Esophagus squamous epithelium (tissue), 5 donors: ENCODE measurements at regions of chr1 and their contacts with region 1.

Region 1: GRCh38 chr1:165600793-165601192 is 30.2 kb upstream of the MGST3 start:
- DNase-seq: no peak
- H3K4me3 ChIP-seq: no peak overlapping the region
- H3K27ac ChIP-seq: no peak overlapping the region
- H3K4me1 ChIP-seq: peaks cover 5 to 18% (median 8%) of the 10 kb centered on the region in 3 donors
- H3K27me3 ChIP-seq: peaks cover 0 to 3% (median 0%) of the 10 kb centered on the region in 4 donors
- CTCF ChIP-seq: no peak
- POLR2A ChIP-seq: no peak

Region 2: GRCh38 chr1:165306541-165307434 is 294.0 kb before region 1 on chr1:
- intact Hi-C with region 1: no loop called
- DNase-seq: no peak
- H3K4me3 ChIP-seq: no peak overlapping the region
- H3K27ac ChIP-seq: no peak overlapping the region
- H3K4me1 ChIP-seq: no peaks in the 10 kb centered on the region
- H3K27me3 ChIP-seq: peaks cover 0 to 73% (median 0%) of the 10 kb centered on the region in 4 donors
- CTCF ChIP-seq: peak in 1 of 6 experiments; percentile 21
- POLR2A ChIP-seq: no peak

Region 3: DNA sequence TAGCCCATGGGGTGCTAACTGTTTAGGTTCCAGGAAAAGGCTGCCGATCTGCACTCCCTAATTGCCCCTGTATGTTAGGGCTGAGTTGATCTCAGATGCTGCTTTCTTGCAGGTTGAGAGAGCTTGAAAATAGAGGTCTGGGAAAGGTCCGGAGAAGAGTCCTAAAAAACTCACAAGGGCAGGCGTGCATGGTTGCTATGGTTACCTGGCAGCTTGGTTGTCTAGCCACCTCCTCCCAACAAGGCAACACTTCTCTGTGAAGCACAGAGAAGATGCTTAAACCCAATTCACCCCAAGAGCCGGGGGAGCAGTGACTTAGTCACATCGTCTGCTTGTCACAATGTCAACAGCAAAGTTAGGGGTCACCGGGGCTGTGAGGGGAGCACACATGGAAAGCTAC is 88.0 kb before region 1 on chr1:
- intact Hi-C with region 1: no loop called
- DNase-seq: no peak
- H3K4me3 ChIP-seq: no peak overlapping the region
- H3K27ac ChIP-seq: no peak overlapping the region
- H3K4me1 ChIP-seq: no peaks in the 10 kb centered on the region
- H3K27me3 ChIP-seq: no peaks in the 10 kb centered on the region
- CTCF ChIP-seq: no peak
- POLR2A ChIP-seq: no peak

Region 4: GRCh38 chr1:165531021-165531420 is 69.8 kb before region 1 on chr1:
- intact Hi-C with region 1: no loop called
- DNase-seq: no peak
- H3K4me3 ChIP-seq: no peak overlapping the region
- H3K27ac ChIP-seq: no peak overlapping the region
- H3K4me1 ChIP-seq: no peaks in the 10 kb centered on the region
- H3K27me3 ChIP-seq: peaks cover 0 to 8% (median 0%) of the 10 kb centered on the region in 4 donors
- CTCF ChIP-seq: no peak
- POLR2A ChIP-seq: no peak

Region 5: GRCh38 chr1:165717918-165718515 is 117.2 kb after region 1 on chr1:
- intact Hi-C with region 1: loop called (anchors 10 kb)
- DNase-seq: no peak
- H3K4me3 ChIP-seq: no peak overlapping the region
- H3K27ac ChIP-seq: no peak overlapping the region
- H3K4me1 ChIP-seq: no peaks in the 10 kb centered on the region
- H3K27me3 ChIP-seq: no peaks in the 10 kb centered on the region
- CTCF ChIP-seq: peak; percentile 32 to 76 (median 61)
- POLR2A ChIP-seq: no peak

Region 6: GRCh38 chr1:165807613-165808012 is 206.8 kb after region 1 on chr1:
- intact Hi-C with region 1: no loop called
- DNase-seq: no peak
- H3K4me3 ChIP-seq: no peak overlapping the region
- H3K27ac ChIP-seq: no peak overlapping the region
- H3K4me1 ChIP-seq: no peaks in the 10 kb centered on the region
- H3K27me3 ChIP-seq: no peaks in the 10 kb centered on the region
- CTCF ChIP-seq: no peak
- POLR2A ChIP-seq: no peak